ENCODE measurements at regions of chr9 and their contacts with region 1.

Region 1: GRCh38 chr9:128361986-128362646 is 9.1 kb upstream of the URM1 start:
- DNase-seq: peak; percentile 64 to 75 (median 67)
- H3K4me3 ChIP-seq: peak overlapping the region; percentile 47 to 55
- H3K4me3 Mint-ChIP-seq: peak overlapping the region; percentile 80 to 88 (median 85)
- H3K27ac ChIP-seq: peak overlapping the region; percentile 36
- H3K27ac Mint-ChIP-seq: peak overlapping the region; percentile 62 to 93 (median 81)
- H3K4me1 ChIP-seq: peaks cover 19% of the 10 kb centered on the region
- H3K4me1 Mint-ChIP-seq: peaks cover 2 to 18% (median 8%) of the 10 kb centered on the region in 4 donors
- H3K27me3 ChIP-seq: no peaks in the 10 kb centered on the region
- H3K27me3 Mint-ChIP-seq: peaks cover 2% of the 10 kb centered on the region in 2 donors

Region 2: GRCh38 chr9:128296337-128297220 is 65.5 kb before region 1 on chr9:
- CTCF ChIA-PET with region 1: interaction called, 13 read pairs
- POLR2A ChIA-PET with region 1: no interaction called
- intact Hi-C with region 1: loop called (anchors 1 kb)
- DNase-seq: no peak
- H3K4me3 ChIP-seq: no peak overlapping the region
- H3K4me3 Mint-ChIP-seq: no peak overlapping the region
- H3K27ac ChIP-seq: no peak overlapping the region
- H3K27ac Mint-ChIP-seq: peak overlapping the region in 2 of 7 donors; percentile 18 to 48
- H3K4me1 ChIP-seq: no peaks in the 10 kb centered on the region
- H3K4me1 Mint-ChIP-seq: peaks cover 2 to 5% (median 4%) of the 10 kb centered on the region in 4 donors
- H3K27me3 ChIP-seq: no peaks in the 10 kb centered on the region
- H3K27me3 Mint-ChIP-seq: no peaks in the 10 kb centered on the region

Region 3: GRCh38 chr9:128412120-128412790 is 50.1 kb after region 1 on chr9:
- CTCF ChIA-PET with region 1: interaction called, 10 read pairs
- POLR2A ChIA-PET with region 1: interaction called, 4 read pairs
- intact Hi-C with region 1: loop called (anchors 1 kb)
- DNase-seq: peak in 4 of 5 donors; percentile 31 to 42 (median 36)
- H3K4me3 ChIP-seq: no peak overlapping the region
- H3K4me3 Mint-ChIP-seq: no peak overlapping the region
- H3K27ac ChIP-seq: no peak overlapping the region
- H3K27ac Mint-ChIP-seq: no peak overlapping the region
- H3K4me1 ChIP-seq: no peaks in the 10 kb centered on the region
- H3K4me1 Mint-ChIP-seq: peaks cover 0 to 1% (median 0%) of the 10 kb centered on the region in 4 donors
- H3K27me3 ChIP-seq: peaks cover 11% of the 10 kb centered on the region
- H3K27me3 Mint-ChIP-seq: peaks cover 29 to 44% of the 10 kb centered on the region in 2 donors

Region 4: DNA sequence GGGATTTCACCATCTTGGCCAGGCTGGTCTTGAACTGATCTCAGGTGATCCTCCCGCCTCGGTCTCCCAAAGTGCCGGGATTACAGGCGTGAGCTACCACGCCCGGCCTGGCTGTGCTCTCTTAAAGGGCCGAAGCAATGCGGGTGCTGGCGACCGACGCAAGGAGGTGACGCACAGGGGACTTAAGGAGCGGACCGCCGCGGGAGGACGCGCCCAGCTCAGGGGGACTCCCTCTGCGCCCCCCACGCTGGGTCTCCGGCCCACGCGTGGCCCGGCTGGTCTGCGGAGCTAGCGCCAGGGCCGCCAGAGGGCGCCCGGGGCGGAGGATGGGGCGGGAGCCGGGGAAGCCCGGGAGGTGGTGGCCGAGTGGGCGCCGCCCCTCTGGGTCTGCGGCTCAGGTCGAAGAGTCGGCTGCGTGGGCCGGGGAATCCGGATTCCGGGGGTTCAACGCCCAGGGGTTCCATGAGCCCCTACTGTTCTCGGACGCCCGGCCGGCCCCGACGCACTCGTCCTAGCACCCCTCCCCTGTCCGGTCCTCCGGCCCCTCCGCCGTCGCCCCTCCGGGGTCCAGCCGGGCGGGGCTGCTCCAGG is 58.0 kb after region 1 on chr9:
- CTCF ChIA-PET with region 1: interaction called, 20 read pairs
- POLR2A ChIA-PET with region 1: interaction called, 3 read pairs
- intact Hi-C with region 1: loop called (anchors 2 kb)
- DNase-seq: peak; percentile 51 to 59 (median 57)
- H3K4me3 ChIP-seq: peak overlapping the region; percentile 29 to 58
- H3K4me3 Mint-ChIP-seq: peak overlapping the region; percentile 77 to 87 (median 84)
- H3K27ac ChIP-seq: peak overlapping the region; percentile 21
- H3K27ac Mint-ChIP-seq: peak overlapping the region in 1 of 7 donors; percentile 70
- H3K4me1 ChIP-seq: peaks cover 14% of the 10 kb centered on the region
- H3K4me1 Mint-ChIP-seq: peaks cover 0 to 13% (median 8%) of the 10 kb centered on the region in 4 donors
- H3K27me3 ChIP-seq: peaks cover 16% of the 10 kb centered on the region
- H3K27me3 Mint-ChIP-seq: peaks cover 17 to 24% of the 10 kb centered on the region in 2 donors

Region 5: DNA sequence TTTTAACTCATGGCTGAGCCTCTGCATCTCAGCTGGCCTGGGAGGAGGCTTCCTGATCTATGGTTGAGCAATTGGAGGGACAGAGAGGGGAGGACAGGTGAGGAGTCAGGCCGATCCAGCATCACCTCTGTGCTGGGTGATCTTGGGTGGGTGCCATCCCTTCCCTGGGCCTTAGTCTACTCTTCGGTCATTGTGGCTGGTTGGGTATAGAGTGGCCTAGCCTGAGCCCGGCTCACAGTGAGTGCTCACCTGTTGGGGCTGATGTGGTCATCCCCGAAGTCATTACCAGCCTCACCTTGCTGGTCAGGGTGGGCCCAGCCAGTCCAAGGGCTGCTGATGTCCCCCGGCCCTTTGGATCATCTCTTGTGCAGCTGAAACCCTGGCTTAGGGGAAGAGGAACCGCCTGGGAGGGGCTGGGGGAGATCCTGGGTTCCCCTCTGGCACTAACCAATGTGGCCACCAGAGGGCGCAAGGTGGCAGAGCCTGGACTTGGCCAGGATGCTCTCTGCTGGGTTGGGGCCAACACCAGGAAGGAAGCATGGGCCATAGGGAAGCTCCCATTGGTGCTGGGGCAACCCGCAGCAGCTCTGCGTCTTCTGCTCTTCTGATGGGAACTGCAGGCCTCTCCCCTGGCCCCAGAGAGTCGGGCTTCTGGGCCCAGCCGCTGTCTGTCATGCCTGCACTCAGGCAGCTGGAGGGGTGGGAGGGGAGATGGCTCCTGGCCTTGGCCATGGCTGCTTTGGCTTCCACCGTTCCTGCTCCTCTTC is 76.4 kb after region 1 on chr9:
- CTCF ChIA-PET with region 1: interaction called, 13 read pairs
- POLR2A ChIA-PET with region 1: no interaction called
- intact Hi-C with region 1: no loop called
- DNase-seq: peak; percentile 60 to 76 (median 66)
- H3K4me3 ChIP-seq: no peak overlapping the region
- H3K4me3 Mint-ChIP-seq: peak overlapping the region in 1 of 8 donors; percentile 10
- H3K27ac ChIP-seq: no peak overlapping the region
- H3K27ac Mint-ChIP-seq: peak overlapping the region in 1 of 7 donors; percentile 23
- H3K4me1 ChIP-seq: peaks cover 7% of the 10 kb centered on the region
- H3K4me1 Mint-ChIP-seq: peaks cover 0 to 11% (median 3%) of the 10 kb centered on the region in 4 donors
- H3K27me3 ChIP-seq: no peaks in the 10 kb centered on the region
- H3K27me3 Mint-ChIP-seq: no peaks in the 10 kb centered on the region

Region 6: GRCh38 chr9:128470560-128470959 is 108.4 kb after region 1 on chr9:
- CTCF ChIA-PET with region 1: no interaction called
- POLR2A ChIA-PET with region 1: no interaction called
- intact Hi-C with region 1: no loop called
- DNase-seq: no peak
- H3K4me3 ChIP-seq: no peak overlapping the region
- H3K4me3 Mint-ChIP-seq: no peak overlapping the region
- H3K27ac ChIP-seq: no peak overlapping the region
- H3K27ac Mint-ChIP-seq: peak overlapping the region in 2 of 7 donors; percentile 59 to 89
- H3K4me1 ChIP-seq: no peaks in the 10 kb centered on the region
- H3K4me1 Mint-ChIP-seq: peaks cover 0 to 5% (median 2%) of the 10 kb centered on the region in 4 donors
- H3K27me3 ChIP-seq: no peaks in the 10 kb centered on the region
- H3K27me3 Mint-ChIP-seq: no peaks in the 10 kb centered on the region

Region 7: GRCh38 chr9:128504485-128505413 is 142.6 kb after region 1 on chr9 and contains the start of gene GLE1:
- CTCF ChIA-PET with region 1: interaction called, 3 read pairs
- POLR2A ChIA-PET with region 1: no interaction called
- intact Hi-C with region 1: loop called (anchors 10 kb)
- DNase-seq: peak; percentile 92 to 96 (median 95)
- H3K4me3 ChIP-seq: peak within 1 kb of the TSS; percentile 96 to 100
- H3K4me3 Mint-ChIP-seq: peak within 1 kb of the TSS; percentile 96 to 100 (median 99)
- H3K27ac ChIP-seq: peak within 1 kb of the TSS; percentile 91
- H3K27ac Mint-ChIP-seq: peak within 1 kb of the TSS; percentile 96 to 100 (median 99)
- H3K4me1 ChIP-seq: peaks cover 21% of the 10 kb centered on the region
- H3K4me1 Mint-ChIP-seq: peaks cover 13 to 45% (median 25%) of the 10 kb centered on the region in 4 donors
- H3K27me3 ChIP-seq: no peaks in the 10 kb centered on the region
- H3K27me3 Mint-ChIP-seq: no peaks in the 10 kb centered on the region
- total RNA-seq, gene GLE1: 31.1 to 32.2 TPM